ENCODE measurements at regions of chr19 and their contacts with region 1.

Region 1: GRCh38 chr19:5622463-5623396 is at the starts of genes SAFB and SAFB2:
- DNase-seq: peak; percentile 99 to 100 (median 99)
- ATAC-seq: peak; percentile 87
- H3K4me3 ChIP-seq: peak within 1 kb of the TSS; percentile 91 to 93
- H3K4me3 Mint-ChIP-seq: peak within 1 kb of the TSS; percentile 100
- H3K27ac ChIP-seq: peak within 1 kb of the TSS; percentile 90 to 94
- H3K27ac Mint-ChIP-seq: peak within 1 kb of the TSS; percentile 99
- H3K4me1 ChIP-seq: peaks cover 77% of the 10 kb centered on the region
- H3K4me1 Mint-ChIP-seq: peaks cover 69% of the 10 kb centered on the region
- H3K27me3 ChIP-seq: no peaks in the 10 kb centered on the region
- H3K27me3 Mint-ChIP-seq: no peaks in the 10 kb centered on the region
- CTCF ChIP-seq: no peak
- total RNA-seq, gene SAFB: 190 to 191 TPM
- total RNA-seq, gene SAFB2: 293 to 302 TPM

Region 2: DNA sequence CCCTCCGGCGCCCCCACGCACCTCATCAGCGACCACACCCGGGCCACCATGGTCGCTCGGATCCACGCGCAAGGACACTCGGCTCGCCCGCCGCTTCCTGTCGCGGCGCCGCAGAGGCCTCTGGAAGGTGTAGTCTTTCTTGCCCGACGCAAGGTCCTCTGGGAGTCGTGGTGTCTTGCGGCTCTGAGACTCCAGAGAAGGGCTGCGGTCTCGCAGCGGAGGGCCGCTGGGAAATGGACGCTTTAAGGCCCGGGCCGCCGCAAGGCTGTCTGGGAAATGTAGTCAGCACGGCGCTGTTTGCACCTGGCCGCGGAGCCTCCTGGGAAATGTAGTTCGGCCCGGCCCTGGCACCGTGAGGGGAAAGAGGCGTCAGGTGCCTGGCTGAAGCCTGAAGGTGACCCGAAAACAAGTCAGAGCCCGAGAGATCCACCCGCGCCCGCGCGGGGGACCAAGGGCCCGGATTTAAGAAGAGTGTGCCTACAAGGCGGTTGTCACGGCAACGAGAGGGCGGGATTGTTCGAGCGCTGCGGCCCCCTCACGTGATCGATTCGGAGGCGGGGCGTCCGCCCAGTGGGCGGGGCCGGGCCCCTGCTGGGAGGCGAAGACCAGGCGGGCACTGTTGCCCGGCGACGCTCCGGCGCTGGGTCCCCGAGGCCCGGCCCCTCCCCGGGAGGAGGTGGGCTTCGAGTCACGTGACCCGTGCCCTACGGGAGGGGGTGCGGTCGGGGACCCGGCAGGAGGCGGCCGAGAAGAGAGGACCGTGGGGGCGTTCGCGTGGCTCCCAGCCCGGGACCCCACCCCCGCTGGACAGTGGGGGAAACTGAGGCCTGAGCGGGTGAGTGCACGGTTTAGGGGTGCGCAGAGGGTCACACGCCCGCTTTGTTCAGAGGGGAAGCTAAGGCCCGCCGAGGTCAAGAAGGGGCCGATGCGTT is 58.0 kb after region 1 on chr19 and contains the starts of genes HSD11B1L and MICOS13:
- CTCF ChIA-PET with region 1: interaction called, 3 read pairs
- POLR2A ChIA-PET with region 1: interaction called, 7 read pairs
- intact Hi-C with region 1: loop called (anchors 1 kb)
- DNase-seq: peak; percentile 95 to 100 (median 98)
- ATAC-seq: peak; percentile 94
- H3K4me3 ChIP-seq: peak within 1 kb of the TSS; percentile 94 to 96
- H3K4me3 Mint-ChIP-seq: peak within 1 kb of the TSS; percentile 90
- H3K27ac ChIP-seq: peak within 1 kb of the TSS; percentile 98 to 100
- H3K27ac Mint-ChIP-seq: peak within 1 kb of the TSS; percentile 96
- H3K4me1 ChIP-seq: peaks cover 15% of the 10 kb centered on the region
- H3K4me1 Mint-ChIP-seq: peaks cover 25% of the 10 kb centered on the region
- H3K27me3 ChIP-seq: no peaks in the 10 kb centered on the region
- H3K27me3 Mint-ChIP-seq: no peaks in the 10 kb centered on the region
- CTCF ChIP-seq: no peak
- total RNA-seq, gene HSD11B1L: 3.1 to 4.1 TPM
- total RNA-seq, gene MICOS13: 19.6 to 24.8 TPM

Region 3: GRCh38 chr19:5690125-5690954 is 67.6 kb after region 1 on chr19 and contains the start of gene RPL36:
- CTCF ChIA-PET with region 1: interaction called, 6 read pairs
- POLR2A ChIA-PET with region 1: interaction called, 13 read pairs
- intact Hi-C with region 1: no loop called
- DNase-seq: peak; percentile 95 to 100 (median 99)
- ATAC-seq: peak; percentile 63
- H3K4me3 ChIP-seq: peak within 1 kb of the TSS; percentile 84 to 96
- H3K4me3 Mint-ChIP-seq: peak within 1 kb of the TSS; percentile 91
- H3K27ac ChIP-seq: peak within 1 kb of the TSS; percentile 86 to 89
- H3K27ac Mint-ChIP-seq: peak within 1 kb of the TSS; percentile 93
- H3K4me1 ChIP-seq: peaks cover 26% of the 10 kb centered on the region
- H3K4me1 Mint-ChIP-seq: peaks cover 48% of the 10 kb centered on the region
- H3K27me3 ChIP-seq: no peaks in the 10 kb centered on the region
- H3K27me3 Mint-ChIP-seq: no peaks in the 10 kb centered on the region
- CTCF ChIP-seq: peak; percentile 96
- total RNA-seq, gene RPL36: 1,425 to 1,465 TPM

Region 4: GRCh38 chr19:5719961-5720790 is 97.4 kb after region 1 on chr19 and contains the starts of genes CATSPERD and LONP1:
- CTCF ChIA-PET with region 1: interaction called, 4 read pairs
- POLR2A ChIA-PET with region 1: interaction called, 5 read pairs
- intact Hi-C with region 1: loop called in 1 of 2 experiments (anchors 1 kb)
- DNase-seq: peak; percentile 92 to 100 (median 97)
- ATAC-seq: peak; percentile 86
- H3K4me3 ChIP-seq: peak within 1 kb of the TSS; percentile 91 to 94
- H3K4me3 Mint-ChIP-seq: peak within 1 kb of the TSS; percentile 92
- H3K27ac ChIP-seq: peak within 1 kb of the TSS; percentile 93 to 96
- H3K27ac Mint-ChIP-seq: peak within 1 kb of the TSS; percentile 96
- H3K4me1 ChIP-seq: peaks cover 23% of the 10 kb centered on the region
- H3K4me1 Mint-ChIP-seq: peaks cover 29% of the 10 kb centered on the region
- H3K27me3 ChIP-seq: no peaks in the 10 kb centered on the region
- H3K27me3 Mint-ChIP-seq: no peaks in the 10 kb centered on the region
- CTCF ChIP-seq: peak; percentile 89
- total RNA-seq, gene CATSPERD: not detected
- total RNA-seq, gene LONP1: 90.6 to 109 TPM